Ovary (tissue), 10 donors: ENCODE measurements at regions of chr2 and their contacts with region 1.

Region 1: DNA sequence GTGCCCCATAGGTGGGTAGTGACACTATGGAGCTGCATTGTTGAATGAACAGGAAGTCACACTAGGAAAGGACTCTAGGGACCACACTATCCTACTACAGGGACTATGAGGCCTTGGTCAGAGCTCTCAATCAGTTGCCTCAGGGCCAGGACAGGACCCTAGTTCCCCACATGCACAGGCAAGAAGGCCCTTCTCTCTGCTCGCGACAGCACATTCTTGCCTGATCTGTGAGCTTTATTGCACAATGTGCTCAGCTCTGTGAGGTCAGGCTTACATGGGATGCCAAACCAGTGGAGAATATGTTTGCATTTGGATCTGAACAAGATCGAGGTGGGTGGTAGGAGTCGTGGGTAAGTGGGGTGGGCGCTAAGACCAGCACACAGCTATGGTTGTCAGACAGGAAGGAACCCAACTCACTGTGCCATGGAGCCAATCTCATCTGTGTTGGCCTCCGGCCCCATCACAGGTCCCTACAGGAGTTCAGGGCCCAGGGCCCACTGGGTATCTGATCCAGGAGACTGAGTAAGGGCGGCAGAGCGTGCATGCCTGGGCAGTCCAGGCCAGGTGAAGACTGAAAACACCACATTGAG is 8.0 kb downstream of the PCARE start:
- DNase-seq: peak in 1 of 5 donors; percentile 49
- H3K4me3 ChIP-seq: no peak overlapping the region
- H3K27ac ChIP-seq: no peak overlapping the region
- H3K4me1 ChIP-seq: peaks cover 25% of the 10 kb centered on the region
- H3K27me3 ChIP-seq: no peaks in the 10 kb centered on the region
- CTCF ChIP-seq: no peak
- EP300 ChIP-seq: no peak
- POLR2A ChIP-seq: no peak

Region 2: DNA sequence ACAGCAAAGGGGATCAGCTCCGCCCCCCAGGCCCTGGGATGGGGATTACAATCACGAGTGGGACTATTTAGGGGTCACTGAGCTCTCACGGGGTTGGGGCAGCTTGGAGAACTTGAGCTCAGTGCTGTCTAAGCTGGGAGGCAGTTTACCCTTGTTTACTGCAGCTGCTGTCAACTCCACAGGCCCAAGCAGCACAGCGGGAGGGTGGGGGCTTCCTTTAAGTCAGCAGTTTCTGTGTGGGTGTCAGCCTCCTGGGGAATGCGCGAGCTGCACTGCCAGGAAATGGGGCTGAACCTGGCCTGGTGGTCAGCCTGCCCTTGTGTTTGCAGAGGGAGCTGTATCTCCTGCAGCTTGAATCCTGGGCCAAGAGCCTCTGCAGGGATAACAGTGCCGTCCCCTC is 55.4 kb before region 1 on chr2:
- intact Hi-C with region 1: loop called in 1 of 4 experiments (anchors 2 kb)
- DNase-seq: peak; percentile 46 to 73 (median 52)
- H3K4me3 ChIP-seq: no peak overlapping the region
- H3K27ac ChIP-seq: peak overlapping the region in 1 of 2 donors; percentile 37
- H3K4me1 ChIP-seq: peaks cover 29% of the 10 kb centered on the region
- H3K27me3 ChIP-seq: no peaks in the 10 kb centered on the region
- CTCF ChIP-seq: no peak
- EP300 ChIP-seq: no peak
- POLR2A ChIP-seq: no peak

Region 3: DNA sequence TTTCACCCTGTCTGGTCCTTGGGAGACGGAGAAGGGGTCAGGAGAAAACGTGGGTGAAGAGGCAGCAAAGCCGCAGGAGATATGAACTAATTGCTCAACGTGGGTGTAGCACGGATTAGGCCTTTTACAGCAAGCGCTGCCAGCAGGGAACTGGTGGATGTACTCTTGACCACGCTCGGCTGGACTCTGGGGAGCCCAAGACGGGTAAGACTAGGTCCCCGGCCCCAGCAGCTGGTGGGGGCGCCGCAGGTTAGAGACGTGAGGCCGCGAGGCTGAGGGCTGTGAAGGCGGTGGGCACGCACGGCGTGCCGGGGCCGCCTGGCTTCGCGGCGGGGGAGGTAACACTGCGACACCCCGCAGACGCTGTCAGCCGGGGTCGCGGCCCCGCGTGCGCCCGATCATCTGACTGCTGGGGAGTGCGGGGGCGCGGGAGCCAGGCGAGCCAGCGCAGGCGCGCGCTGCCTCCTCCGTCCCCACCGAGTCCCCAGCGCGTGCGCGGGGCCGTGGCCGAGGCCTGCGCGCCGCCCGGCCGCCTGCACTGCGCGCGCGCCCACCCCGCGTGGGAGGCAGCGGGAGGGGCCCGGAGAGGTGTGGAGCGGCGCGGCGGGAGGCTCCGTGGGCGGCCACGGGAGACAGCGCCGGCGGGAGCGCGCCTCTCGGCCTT is 48.7 kb after region 1 on chr2 and contains the start of gene CLIP4:
- intact Hi-C with region 1: loop called in 1 of 4 experiments (anchors 5 kb)
- DNase-seq: peak; percentile 72 to 84 (median 74)
- H3K4me3 ChIP-seq: peak within 1 kb of the TSS; percentile 85
- H3K27ac ChIP-seq: peak within 1 kb of the TSS; percentile 79 to 90
- H3K4me1 ChIP-seq: peaks cover 4% of the 10 kb centered on the region
- H3K27me3 ChIP-seq: no peaks in the 10 kb centered on the region
- CTCF ChIP-seq: no peak
- EP300 ChIP-seq: no peak
- POLR2A ChIP-seq: no peak
- total RNA-seq, gene CLIP4: 40.2 to 64.7 (median 54.4) TPM